Uterus (tissue), 4 donors: ENCODE measurements at regions of chr6 and their contacts with region 1.

Region 1: GRCh38 chr6:3549314-3549940 is 92.6 kb upstream of the SLC22A23 start:
- DNase-seq: no peak
- H3K4me3 ChIP-seq: no peak overlapping the region
- H3K27ac ChIP-seq: no peak overlapping the region
- H3K4me1 ChIP-seq: no peaks in the 10 kb centered on the region
- H3K27me3 ChIP-seq: no peaks in the 10 kb centered on the region
- CTCF ChIP-seq: no peak
- POLR2A ChIP-seq: no peak

Region 2: GRCh38 chr6:3222506-3223038 is 326.9 kb before region 1 on chr6:
- intact Hi-C with region 1: loop called (anchors 5 kb)
- DNase-seq: no peak
- H3K4me3 ChIP-seq: no peak overlapping the region
- H3K27ac ChIP-seq: no peak overlapping the region
- H3K4me1 ChIP-seq: peaks cover 0 to 10% of the 10 kb centered on the region in 2 donors
- H3K27me3 ChIP-seq: peaks cover 0 to under 1% of the 10 kb centered on the region in 2 donors
- CTCF ChIP-seq: no peak
- POLR2A ChIP-seq: no peak

Region 3: DNA sequence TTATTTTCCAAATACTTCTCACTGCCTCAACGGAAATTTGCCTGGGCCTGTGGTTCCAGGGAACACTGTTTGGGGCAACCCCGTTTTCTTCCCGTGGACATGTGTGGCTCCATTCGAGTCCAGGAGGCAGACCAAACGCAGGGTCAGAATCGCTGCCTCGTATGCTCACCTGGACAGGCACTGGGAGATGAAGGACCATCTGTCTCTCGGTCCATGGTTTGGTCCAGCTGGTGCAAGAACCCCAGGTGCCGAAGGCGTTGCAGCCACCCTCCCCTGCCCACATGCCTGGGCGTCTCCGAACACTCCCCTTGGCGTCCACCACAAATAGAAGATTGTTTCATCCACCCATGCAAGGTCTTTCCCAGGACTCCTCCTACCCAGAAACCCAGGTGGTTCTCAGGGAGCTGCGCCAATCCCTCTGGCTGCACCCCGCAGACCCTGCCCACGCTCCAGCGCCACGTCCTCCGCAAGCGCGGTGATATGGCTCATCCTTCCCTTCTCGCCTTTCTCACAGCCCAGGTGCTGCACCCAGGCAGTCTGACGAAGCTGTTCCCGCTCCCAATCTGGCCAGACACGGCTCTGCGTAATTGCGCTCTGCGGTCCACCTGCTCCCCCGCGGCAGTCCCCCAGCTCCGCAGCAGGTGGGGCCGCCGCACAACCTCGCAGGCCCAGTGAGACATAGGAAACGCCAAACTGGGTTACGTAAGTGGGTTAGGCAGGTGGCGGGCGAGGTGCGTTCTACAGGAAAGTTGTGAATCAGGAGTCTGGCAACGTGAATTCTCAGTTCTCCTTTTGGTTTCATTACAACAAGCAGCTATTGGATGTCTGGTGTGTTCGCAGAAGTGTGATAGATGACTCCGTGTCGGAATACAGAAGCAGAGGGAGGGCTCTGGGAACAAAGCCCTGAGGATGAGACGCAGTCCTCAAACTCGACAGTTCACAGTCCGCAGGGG is 732.2 kb after region 1 on chr6:
- intact Hi-C with region 1: no loop called
- DNase-seq: peak; percentile 37 to 52
- H3K4me3 ChIP-seq: peak overlapping the region; percentile 17 to 30
- H3K27ac ChIP-seq: no peak overlapping the region
- H3K4me1 ChIP-seq: no peaks in the 10 kb centered on the region
- H3K27me3 ChIP-seq: no peaks in the 10 kb centered on the region
- CTCF ChIP-seq: peak; percentile 45 to 60 (median 51)
- POLR2A ChIP-seq: no peak